Caco-2 (cell line): ENCODE measurements at regions of chr12 and their contacts with region 1.

Region 1: GRCh38 chr12:57368349-57369095 is 62.3 kb downstream of the R3HDM2 start:
- DNase-seq: peak; percentile 86 to 91
- H3K4me3 ChIP-seq: no peak overlapping the region
- H3K4me3 Mint-ChIP-seq: peak overlapping the region; percentile 34
- H3K27ac Mint-ChIP-seq: peak overlapping the region; percentile 90
- H3K4me1 ChIP-seq: peaks cover 37% of the 10 kb centered on the region
- H3K4me1 Mint-ChIP-seq: peaks cover 18% of the 10 kb centered on the region
- H3K27me3 ChIP-seq: no peaks in the 10 kb centered on the region
- H3K27me3 Mint-ChIP-seq: no peaks in the 10 kb centered on the region
- CTCF ChIP-seq: no peak

Region 2: GRCh38 chr12:57309420-57309819 is 59.1 kb before region 1 on chr12:
- CTCF ChIA-PET with region 1: interaction called, 17 read pairs
- POLR2A ChIA-PET with region 1: no interaction called
- intact Hi-C with region 1: no loop called
- DNase-seq: no peak
- H3K4me3 ChIP-seq: no peak overlapping the region
- H3K4me3 Mint-ChIP-seq: no peak overlapping the region
- H3K27ac Mint-ChIP-seq: no peak overlapping the region
- H3K4me1 ChIP-seq: no peaks in the 10 kb centered on the region
- H3K4me1 Mint-ChIP-seq: no peaks in the 10 kb centered on the region
- H3K27me3 ChIP-seq: no peaks in the 10 kb centered on the region
- H3K27me3 Mint-ChIP-seq: no peaks in the 10 kb centered on the region
- CTCF ChIP-seq: no peak

Region 3: GRCh38 chr12:57430931-57431720 is 62.6 kb after region 1 on chr12 and contains the start of gene R3HDM2:
- CTCF ChIA-PET with region 1: interaction called, 8 read pairs
- POLR2A ChIA-PET with region 1: interaction called, 4 read pairs
- intact Hi-C with region 1: loop called (anchors 2 kb)
- DNase-seq: peak; percentile 96
- H3K4me3 ChIP-seq: peak within 1 kb of the TSS; percentile 49
- H3K4me3 Mint-ChIP-seq: peak within 1 kb of the TSS; percentile 81
- H3K27ac Mint-ChIP-seq: peak within 1 kb of the TSS; percentile 96
- H3K4me1 ChIP-seq: peaks cover 9% of the 10 kb centered on the region
- H3K4me1 Mint-ChIP-seq: peaks cover 13% of the 10 kb centered on the region
- H3K27me3 ChIP-seq: no peaks in the 10 kb centered on the region
- H3K27me3 Mint-ChIP-seq: no peaks in the 10 kb centered on the region
- CTCF ChIP-seq: no peak
- total RNA-seq, gene R3HDM2: 33.7 and 36.2 TPM in 2 replicates

Region 4: DNA sequence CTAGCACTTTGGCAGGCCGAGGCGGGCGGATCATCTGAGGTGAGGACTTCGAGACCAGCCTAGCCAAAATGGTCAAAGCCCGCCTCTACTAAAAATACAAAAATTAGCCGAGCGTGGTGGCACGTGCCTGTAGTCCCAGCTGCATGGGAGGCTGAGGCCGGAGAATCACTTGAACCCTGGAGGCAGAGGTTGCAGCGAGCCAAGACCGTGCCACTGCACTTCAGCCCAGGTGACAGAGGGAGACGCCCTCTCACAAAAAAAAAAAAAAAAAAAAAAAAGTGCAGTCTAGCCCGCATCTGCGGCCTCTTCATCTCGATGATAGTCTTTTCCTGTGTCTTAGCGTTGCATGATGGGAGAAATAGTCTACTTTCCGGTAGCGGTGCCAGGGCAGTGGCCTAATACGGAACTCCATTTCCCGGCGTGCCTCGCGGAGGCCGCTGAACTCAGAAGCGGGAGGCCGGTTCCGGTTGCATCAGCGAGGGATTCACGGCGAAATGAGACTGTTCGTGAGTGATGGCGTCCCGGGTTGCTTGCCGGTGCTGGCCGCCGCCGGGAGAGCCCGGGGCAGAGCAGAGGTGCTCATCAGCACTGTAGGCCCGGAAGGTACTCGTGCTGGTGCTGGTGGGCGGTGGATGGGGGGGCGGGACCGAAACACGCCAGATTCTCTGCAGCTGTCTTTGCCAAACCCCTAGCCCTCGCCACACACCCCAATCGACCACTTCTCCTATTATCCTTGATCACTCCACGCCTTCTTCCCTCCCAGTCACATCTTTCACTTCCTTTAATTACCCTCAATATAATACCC is 119.3 kb after region 1 on chr12 and contains the start of gene MARS1:
- CTCF ChIA-PET with region 1: no interaction called
- POLR2A ChIA-PET with region 1: no interaction called
- intact Hi-C with region 1: no loop called
- DNase-seq: peak; percentile 94
- H3K4me3 ChIP-seq: peak within 1 kb of the TSS; percentile 87
- H3K4me3 Mint-ChIP-seq: peak within 1 kb of the TSS; percentile 94
- H3K27ac Mint-ChIP-seq: peak within 1 kb of the TSS; percentile 97
- H3K4me1 ChIP-seq: 0 out of 2 replicates have a peak, but pooled peaks cover 7% of the 10 kb centered on the region
- H3K4me1 Mint-ChIP-seq: peaks cover 22% of the 10 kb centered on the region
- H3K27me3 ChIP-seq: no peaks in the 10 kb centered on the region
- H3K27me3 Mint-ChIP-seq: no peaks in the 10 kb centered on the region
- CTCF ChIP-seq: no peak
- total RNA-seq, gene MARS1: 515 and 583 TPM in 2 replicates